HepG2 (cell line): ENCODE measurements at regions of chr6 and their contacts with region 1.

Region 1: GRCh38 chr6:39934131-39934757 is at the start of gene MOCS1:
- DNase-seq: peak; percentile 70
- ATAC-seq: peak; percentile 98
- H3K4me3 ChIP-seq: peak within 1 kb of the TSS; percentile 80 to 96 (median 91)
- H3K27ac ChIP-seq: no peak within 1 kb of the TSS
- H3K4me1 ChIP-seq: peaks cover 43% of the 10 kb centered on the region
- H3K27me3 ChIP-seq: 0 out of 5 replicates have a peak, but pooled peaks cover 0 to 3% of the 10 kb centered on the region in 2 experiments
- CTCF ChIP-seq: 0 out of 2 replicates have a peak, but pooled peaks have one; percentile 2
- EP300 ChIP-seq: no peak
- POLR2A ChIP-seq: peak; percentile 73 to 89
- RAD21 ChIP-seq: no peak
- total RNA-seq, gene MOCS1: 10.5 and 11.7 TPM in 2 replicates

Region 2: GRCh38 chr6:39945626-39946025 is 11.4 kb after region 1 on chr6:
- CTCF ChIA-PET with region 1: no interaction called
- POLR2A ChIA-PET with region 1: interaction called, 12 read pairs
- in situ Hi-C with region 1: no loop called
- intact Hi-C with region 1: no loop called
- DNase-seq: no peak
- ATAC-seq: no peak
- H3K4me3 ChIP-seq: no peak overlapping the region
- H3K27ac ChIP-seq: no peak overlapping the region
- H3K4me1 ChIP-seq: peaks cover 35% of the 10 kb centered on the region
- H3K27me3 ChIP-seq: no peaks in the 10 kb centered on the region
- CTCF ChIP-seq: no peak
- EP300 ChIP-seq: no peak
- POLR2A ChIP-seq: no peak
- RAD21 ChIP-seq: no peak

Region 3: GRCh38 chr6:41344876-41345275 is 1410.6 kb after region 1 on chr6:
- CTCF ChIA-PET with region 1: no interaction called
- POLR2A ChIA-PET with region 1: no interaction called
- in situ Hi-C with region 1: no loop called
- intact Hi-C with region 1: no loop called
- DNase-seq: no peak
- ATAC-seq: no peak
- H3K4me3 ChIP-seq: no peak overlapping the region
- H3K27ac ChIP-seq: no peak overlapping the region
- H3K4me1 ChIP-seq: no peaks in the 10 kb centered on the region
- H3K27me3 ChIP-seq: peaks cover 20 to 73% of the 10 kb centered on the region in 2 experiments
- CTCF ChIP-seq: no peak
- EP300 ChIP-seq: no peak
- POLR2A ChIP-seq: no peak
- RAD21 ChIP-seq: no peak